CD4-positive, alpha-beta memory T cell (primary cell): ENCODE measurements at regions of chr10 and their contacts with region 1.

Region 1: DNA sequence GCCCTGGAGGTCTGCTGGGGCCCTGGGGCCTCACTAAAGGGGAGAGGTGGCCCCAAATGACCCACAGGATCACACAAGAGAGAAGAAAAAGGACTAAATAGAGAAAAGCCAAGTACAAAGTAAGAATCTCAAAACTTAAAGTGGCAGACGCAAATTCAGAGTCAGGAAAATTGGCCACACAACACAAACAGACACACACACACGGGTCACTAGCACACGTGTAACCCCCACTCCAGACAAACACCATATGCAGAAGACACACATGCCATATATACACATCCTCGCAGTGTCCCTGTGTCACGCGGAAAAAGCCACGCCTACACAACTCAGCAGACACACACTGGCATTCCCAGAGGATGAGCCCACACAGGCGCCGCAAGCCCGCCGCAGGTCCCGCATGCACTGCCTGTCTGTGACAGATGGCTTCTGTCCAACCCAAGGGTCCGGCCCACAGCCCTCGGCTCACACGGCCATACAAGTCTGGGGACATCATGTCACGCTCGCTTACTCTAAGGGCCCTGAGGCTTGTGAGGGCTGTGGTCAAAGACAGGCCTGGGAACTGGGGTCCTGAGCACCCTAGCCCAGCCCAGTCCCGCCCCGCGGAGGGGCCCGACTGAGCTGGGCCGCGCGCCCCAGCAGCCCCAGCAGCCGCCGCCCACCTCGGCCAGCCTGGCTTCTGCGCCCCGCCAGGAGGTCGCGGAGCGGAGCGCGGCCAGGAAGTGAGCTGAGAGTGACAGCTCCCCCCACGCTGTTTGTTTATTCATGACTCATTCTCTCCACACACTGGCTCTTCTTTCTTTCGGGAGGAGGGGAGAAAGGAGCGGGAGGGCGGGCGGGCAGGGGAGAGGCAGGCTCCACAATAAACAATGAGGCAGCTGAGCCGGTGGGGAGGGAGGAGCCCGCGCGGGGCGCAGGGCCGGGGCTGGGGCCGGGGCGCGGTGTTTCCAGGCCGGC is 95.5 kb upstream of the ZMIZ1 start:
- DNase-seq: peak; percentile 53 to 82 (median 64)
- H3K4me3 ChIP-seq: peak overlapping the region in 1 of 2 donors; percentile 57
- H3K4me3 Mint-ChIP-seq: peak overlapping the region; percentile 78 to 90 (median 84)
- H3K27ac ChIP-seq: no peak overlapping the region
- H3K27ac Mint-ChIP-seq: peak overlapping the region in 6 of 7 donors; percentile 78 to 93 (median 80)
- H3K4me1 ChIP-seq: peaks cover 13% of the 10 kb centered on the region
- H3K4me1 Mint-ChIP-seq: peaks cover 9 to 35% (median 17%) of the 10 kb centered on the region in 4 donors
- H3K27me3 ChIP-seq: no peaks in the 10 kb centered on the region
- H3K27me3 Mint-ChIP-seq: no peaks in the 10 kb centered on the region

Region 2: GRCh38 chr10:78302989-78303854 is 670.0 kb before region 1 on chr10:
- CTCF ChIA-PET with region 1: no interaction called
- POLR2A ChIA-PET with region 1: interaction called, 3 read pairs
- intact Hi-C with region 1: loop called (anchors 1 kb)
- DNase-seq: peak; percentile 93 to 96 (median 95)
- H3K4me3 ChIP-seq: peak overlapping the region; percentile 67 to 70
- H3K4me3 Mint-ChIP-seq: peak overlapping the region; percentile 92 to 97 (median 94)
- H3K27ac ChIP-seq: peak overlapping the region; percentile 91
- H3K27ac Mint-ChIP-seq: peak overlapping the region; percentile 95 to 99 (median 98)
- H3K4me1 ChIP-seq: peaks cover 17% of the 10 kb centered on the region
- H3K4me1 Mint-ChIP-seq: peaks cover 7 to 24% (median 14%) of the 10 kb centered on the region in 4 donors
- H3K27me3 ChIP-seq: no peaks in the 10 kb centered on the region
- H3K27me3 Mint-ChIP-seq: peaks cover 0 to 2% of the 10 kb centered on the region in 2 donors

Region 3: DNA sequence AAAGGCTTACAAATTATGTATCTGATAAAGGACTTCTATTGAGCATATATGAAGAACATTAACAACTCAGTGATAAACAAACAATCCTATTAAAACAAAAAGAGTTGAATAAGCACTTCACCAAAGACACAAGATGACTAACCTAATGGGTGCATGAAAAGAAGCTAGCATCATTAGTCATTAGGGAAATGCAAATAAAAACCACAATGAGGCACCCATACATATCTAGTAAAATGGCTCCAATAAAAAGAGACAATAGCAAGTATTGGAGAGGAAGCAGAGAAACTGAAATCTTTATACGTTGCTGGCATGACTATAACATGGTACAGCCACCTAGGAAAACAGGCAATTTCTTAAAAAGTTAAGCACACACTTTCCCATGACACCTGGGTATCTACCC is 18.0 kb after region 1 on chr10:
- CTCF ChIA-PET with region 1: interaction called, 12 read pairs
- POLR2A ChIA-PET with region 1: no interaction called
- intact Hi-C with region 1: no loop called
- DNase-seq: no peak
- H3K4me3 ChIP-seq: no peak overlapping the region
- H3K4me3 Mint-ChIP-seq: no peak overlapping the region
- H3K27ac ChIP-seq: no peak overlapping the region
- H3K27ac Mint-ChIP-seq: peak overlapping the region in 1 of 7 donors; percentile 35
- H3K4me1 ChIP-seq: peaks cover 11% of the 10 kb centered on the region
- H3K4me1 Mint-ChIP-seq: peaks cover 0 to 24% (median 7%) of the 10 kb centered on the region in 4 donors
- H3K27me3 ChIP-seq: no peaks in the 10 kb centered on the region
- H3K27me3 Mint-ChIP-seq: peaks cover 0 to 1% of the 10 kb centered on the region in 2 donors

Region 4: DNA sequence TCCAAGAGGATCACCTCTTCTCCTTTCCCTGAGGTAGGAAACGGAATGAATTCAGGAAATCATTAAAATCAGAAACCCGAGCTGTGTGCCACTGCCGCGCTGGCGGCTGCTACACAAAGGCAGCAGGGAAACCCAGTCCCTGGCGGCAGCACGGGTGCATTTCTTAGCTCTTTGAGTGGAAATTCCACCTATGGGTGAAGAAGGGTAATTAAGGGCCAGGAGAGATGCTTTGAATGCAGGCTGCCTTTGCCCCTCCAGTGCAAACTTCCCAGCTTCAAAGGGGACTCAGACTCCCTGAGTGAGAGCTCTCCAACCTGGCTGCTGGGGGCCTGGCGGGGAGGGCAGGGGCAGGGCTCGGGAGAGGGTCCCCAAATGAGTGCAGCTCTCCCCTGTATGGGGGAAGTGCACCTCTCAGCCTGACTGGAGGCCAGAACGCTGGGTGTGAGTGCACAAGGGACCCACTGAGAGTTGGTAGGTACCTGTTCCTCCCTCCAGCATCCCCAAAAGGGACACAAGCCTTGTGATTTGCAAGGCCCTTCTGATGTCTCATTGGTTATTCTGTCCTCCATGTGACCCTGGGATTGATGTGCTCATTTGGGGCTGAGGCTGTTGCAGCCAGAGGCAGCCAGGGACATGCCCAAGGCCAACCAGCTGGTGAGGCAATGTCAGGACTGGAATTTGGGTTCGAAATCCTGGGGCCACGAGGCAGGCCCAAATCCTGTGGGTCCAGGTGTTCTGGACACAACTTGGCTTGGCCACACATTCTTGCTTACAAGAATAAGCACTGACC is 79.3 kb after region 1 on chr10:
- CTCF ChIA-PET with region 1: interaction called, 14 read pairs
- POLR2A ChIA-PET with region 1: interaction called, 5 read pairs
- intact Hi-C with region 1: loop called (anchors 1 kb)
- DNase-seq: peak in 3 of 5 donors; percentile 28 to 35 (median 34)
- H3K4me3 ChIP-seq: no peak overlapping the region
- H3K4me3 Mint-ChIP-seq: no peak overlapping the region
- H3K27ac ChIP-seq: no peak overlapping the region
- H3K27ac Mint-ChIP-seq: peak overlapping the region in 1 of 7 donors; percentile 59
- H3K4me1 ChIP-seq: peaks cover 46% of the 10 kb centered on the region
- H3K4me1 Mint-ChIP-seq: peaks cover 27 to 58% (median 37%) of the 10 kb centered on the region in 4 donors
- H3K27me3 ChIP-seq: no peaks in the 10 kb centered on the region
- H3K27me3 Mint-ChIP-seq: no peaks in the 10 kb centered on the region